ENCODE measurements at regions of chr1 and their contacts with region 1.

Region 1: GRCh38 chr1:66350001-66350547 is 183.9 kb upstream of the SGIP1 start:
- DNase-seq: peak in 1 of 2 donors; percentile 64
- ATAC-seq: peak; percentile 63 to 92 (median 78)
- H3K4me3 ChIP-seq: peak overlapping the region in 1 of 10 donors; percentile 12
- H3K27ac ChIP-seq: peak overlapping the region; percentile 47 to 85 (median 66)
- H3K4me1 ChIP-seq: peaks cover 7 to 100% (median 62%) of the 10 kb centered on the region in 9 donors
- H3K27me3 ChIP-seq: no peaks in the 10 kb centered on the region
- CTCF ChIP-seq: no peak

Region 2: DNA sequence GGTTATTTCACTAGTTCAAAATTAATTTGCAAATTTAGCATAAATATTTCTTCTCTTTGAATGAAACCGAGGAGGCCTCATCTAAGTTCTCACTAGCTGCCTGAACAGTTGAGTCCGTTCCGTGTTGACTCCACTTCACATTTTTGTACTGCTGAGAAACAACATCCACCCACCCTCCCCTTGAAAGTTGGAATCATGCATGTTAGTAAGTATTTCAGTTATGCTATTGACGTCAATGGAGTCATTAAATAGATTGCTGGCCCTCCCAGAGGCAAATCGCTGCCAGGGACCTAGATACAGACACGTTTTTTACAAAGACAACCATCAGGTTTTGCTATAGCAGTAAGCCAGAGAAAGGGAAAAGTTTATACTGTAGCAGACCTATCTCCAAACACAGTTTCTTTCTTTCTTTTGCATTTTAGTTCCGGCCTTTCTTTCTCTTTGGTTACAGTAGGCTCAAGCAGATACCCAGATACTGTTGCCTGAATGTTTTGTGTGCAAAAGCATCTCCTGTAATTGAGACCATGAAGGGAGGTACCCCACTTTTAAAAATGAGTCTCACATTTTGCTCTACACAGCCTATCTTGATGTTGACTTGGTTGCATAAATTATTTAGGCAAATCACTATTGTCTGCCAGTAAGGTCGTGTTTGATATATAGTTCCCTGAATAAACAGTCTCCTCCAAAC is 78.7 kb before region 1 on chr1:
- intact Hi-C with region 1: loop called in 1 of 10 experiments (anchors 5 kb)
- DNase-seq: peak; percentile 69 to 95
- ATAC-seq: peak; percentile 89 to 96 (median 94)
- H3K4me3 ChIP-seq: peak overlapping the region in 7 of 10 donors; percentile 3 to 41 (median 20)
- H3K27ac ChIP-seq: peak overlapping the region; percentile 63 to 91 (median 88)
- H3K4me1 ChIP-seq: peaks cover 12 to 95% (median 81%) of the 10 kb centered on the region in 9 donors
- H3K27me3 ChIP-seq: no peaks in the 10 kb centered on the region
- CTCF ChIP-seq: no peak

Region 3: DNA sequence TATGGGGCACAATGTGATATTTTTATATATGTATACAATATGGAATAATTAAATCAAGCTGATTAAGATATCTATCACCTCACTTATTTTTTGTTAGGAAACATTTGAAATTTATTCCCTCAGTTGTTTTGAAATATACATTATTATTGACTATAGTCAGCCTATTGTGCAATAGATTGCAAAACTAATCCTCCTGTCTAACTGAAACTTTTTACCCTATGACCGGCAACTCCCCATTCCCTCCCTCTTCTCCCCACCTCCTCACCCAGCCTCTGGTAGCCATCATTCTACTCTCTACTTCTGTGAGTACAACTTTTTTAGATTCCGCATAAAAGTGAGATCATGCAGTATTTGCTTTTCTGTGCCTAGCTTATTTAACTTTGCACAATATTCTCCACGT is 66.2 kb after region 1 on chr1:
- intact Hi-C with region 1: no loop called
- DNase-seq: no peak
- ATAC-seq: no peak
- H3K4me3 ChIP-seq: no peak overlapping the region
- H3K27ac ChIP-seq: peak overlapping the region in 1 of 10 donors; percentile 21
- H3K4me1 ChIP-seq: peaks cover 0 to 39% (median 0%) of the 10 kb centered on the region in 9 donors
- H3K27me3 ChIP-seq: no peaks in the 10 kb centered on the region
- CTCF ChIP-seq: no peak